GM10248 (cell line): ENCODE measurements at regions of chr10 and their contacts with region 1.

Region 1: DNA sequence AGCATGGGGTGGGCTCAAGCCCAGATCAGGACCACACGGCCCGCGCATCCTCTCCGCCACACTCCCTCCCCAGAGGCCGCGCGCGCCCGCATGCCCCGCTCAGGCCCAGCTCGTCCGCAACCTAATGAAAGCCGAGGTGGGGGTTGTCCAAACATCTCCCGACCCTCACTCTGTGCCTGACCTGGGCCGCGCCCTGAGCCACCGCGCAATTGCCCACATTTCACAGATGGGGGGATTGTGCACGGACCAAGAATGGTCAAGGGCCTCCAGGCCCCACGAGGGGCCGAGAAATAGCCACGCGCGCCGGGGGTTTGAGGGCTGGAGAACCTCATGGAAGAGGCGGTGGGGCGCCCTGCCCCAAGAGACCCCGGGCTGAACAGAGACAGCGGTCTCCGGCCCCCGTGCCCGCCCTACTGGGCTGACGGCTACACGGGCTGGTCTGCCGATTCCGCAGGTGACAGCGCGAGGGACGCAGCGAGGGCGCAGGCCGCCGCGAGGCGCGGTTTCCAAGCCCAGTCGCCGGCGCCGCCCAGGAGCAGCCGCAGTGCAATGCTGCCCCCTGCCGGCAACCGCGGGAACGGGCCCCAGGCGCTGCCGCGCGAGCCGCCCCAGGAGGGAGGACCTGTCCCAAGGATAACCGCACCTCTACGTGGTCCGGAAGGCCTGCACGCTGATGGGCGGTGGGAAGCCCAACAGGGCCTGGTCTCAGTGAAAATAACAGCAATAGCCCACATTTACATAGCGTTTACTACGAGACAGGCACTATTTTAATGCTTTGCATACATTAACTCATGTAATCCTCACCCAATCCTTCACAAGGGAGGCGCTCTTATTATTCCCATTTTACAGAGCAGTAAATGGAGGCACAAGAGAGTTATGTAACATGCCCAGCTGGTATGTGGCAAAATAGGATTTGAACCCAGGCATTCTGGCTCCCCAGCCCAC is 10.5 kb upstream of the GRID1 start:
- DNase-seq: peak; percentile 88
- CTCF ChIP-seq: peak; percentile 93

Region 2: DNA sequence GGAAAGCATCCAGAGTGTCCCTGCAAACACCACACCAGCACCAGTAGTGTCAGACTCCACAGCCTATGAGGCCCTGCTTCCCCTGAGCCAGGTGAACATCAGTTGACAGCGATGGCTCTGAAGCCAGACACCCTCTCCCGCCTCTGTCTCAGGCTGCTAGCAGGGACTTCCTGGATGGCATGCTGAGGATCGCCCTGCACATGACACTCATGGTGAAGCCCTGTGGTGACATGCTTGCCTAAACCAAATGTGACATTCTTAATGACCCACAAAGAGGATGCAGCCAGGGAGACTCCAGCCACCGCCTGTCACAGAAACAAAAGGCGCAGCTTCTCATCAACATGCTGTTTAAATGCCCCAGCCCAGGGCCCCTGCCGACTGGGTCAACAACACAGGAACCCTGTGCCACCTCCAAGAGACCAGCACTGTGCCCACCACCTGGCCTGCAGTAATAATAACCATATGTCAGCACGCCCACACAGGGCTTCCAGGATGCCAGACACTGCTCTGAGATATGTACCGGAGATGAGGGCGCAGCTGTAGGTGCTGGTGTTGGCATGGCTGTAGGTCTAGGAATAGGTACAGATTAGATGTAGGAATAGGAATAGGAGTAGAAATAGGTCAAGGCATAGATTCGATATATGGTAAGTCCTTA is 91.9 kb before region 1 on chr10:
- CTCF ChIA-PET with region 1: no interaction called
- POLR2A ChIA-PET with region 1: no interaction called
- DNase-seq: no peak
- CTCF ChIP-seq: no peak

Region 3: DNA sequence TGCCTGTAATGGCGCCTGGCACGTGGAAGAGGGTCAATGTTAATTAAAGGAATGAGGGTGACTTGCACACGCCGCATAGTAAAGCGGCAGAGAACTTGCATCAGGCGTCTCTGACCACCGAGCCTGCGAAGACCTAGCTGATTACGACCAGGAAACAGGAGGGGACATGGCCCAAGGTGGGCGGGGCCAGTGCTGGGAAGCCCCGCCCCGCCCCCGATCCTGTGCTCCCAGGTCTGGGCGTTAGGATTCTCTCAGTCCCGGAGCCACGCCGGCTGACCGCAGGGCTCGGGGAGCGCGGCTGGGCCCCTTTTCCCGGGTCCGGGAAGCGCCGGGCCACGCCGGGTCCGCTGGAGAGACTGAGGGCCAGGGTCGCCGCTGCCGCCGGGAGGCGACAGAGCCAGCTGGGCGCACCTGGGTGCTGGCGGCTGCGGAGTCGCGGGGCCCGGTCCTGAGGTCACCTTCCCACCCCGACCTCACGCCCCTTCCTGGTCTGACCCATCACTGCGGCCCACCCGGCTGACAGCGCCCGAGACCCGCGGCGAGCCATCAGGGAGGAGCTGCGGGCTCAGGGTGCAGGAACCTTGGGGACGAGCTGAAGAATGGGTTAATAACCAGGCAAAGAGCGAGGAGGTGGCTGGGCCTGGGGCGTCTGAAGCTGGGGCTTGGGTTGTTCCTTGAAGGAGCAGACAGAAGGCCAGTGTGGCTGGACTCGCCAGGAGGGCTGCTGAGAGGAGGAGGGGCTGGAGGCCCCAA is 12.5 kb after region 1 on chr10:
- CTCF ChIA-PET with region 1: interaction called, 11 read pairs
- POLR2A ChIA-PET with region 1: no interaction called
- DNase-seq: peak; percentile 85
- CTCF ChIP-seq: peak; percentile 14